Thyroid gland (tissue), 4 donors: ENCODE measurements at regions of chr18 and their contacts with region 1.

Region 1: DNA sequence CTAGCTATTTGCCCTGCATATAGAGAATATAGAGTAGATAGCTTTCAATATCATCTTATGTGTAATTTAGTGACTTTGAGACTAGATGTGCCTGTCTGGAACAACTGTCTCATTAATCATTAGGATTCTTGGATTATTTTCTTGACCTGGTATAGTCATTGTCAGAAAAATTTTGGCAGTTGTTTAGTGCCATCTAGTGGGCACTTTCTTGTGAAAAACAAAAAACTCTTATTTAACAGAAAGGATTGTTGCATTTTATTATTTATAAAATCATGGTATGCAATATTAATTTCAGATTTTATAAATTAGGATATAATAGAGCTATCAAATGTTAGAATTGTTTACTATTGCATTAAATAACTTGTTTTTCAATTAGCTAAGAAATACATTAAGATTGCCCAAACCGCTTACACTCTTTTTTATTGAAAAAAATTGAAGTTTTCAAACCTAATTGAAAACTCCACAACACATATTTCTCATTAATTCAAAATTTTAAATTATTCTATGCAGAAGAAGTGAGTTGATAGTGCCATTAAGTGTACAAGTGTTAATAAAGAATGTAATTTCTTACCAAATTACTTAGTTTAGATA is 80.3 kb downstream of the DYNAP start:
- DNase-seq: no peak
- H3K4me3 ChIP-seq: no peak overlapping the region
- H3K27ac ChIP-seq: no peak overlapping the region
- H3K4me1 ChIP-seq: no peaks in the 10 kb centered on the region
- H3K27me3 ChIP-seq: no peaks in the 10 kb centered on the region
- CTCF ChIP-seq: peak in 4 of 6 experiments; percentile 20 to 59 (median 52)
- POLR2A ChIP-seq: no peak

Region 2: DNA sequence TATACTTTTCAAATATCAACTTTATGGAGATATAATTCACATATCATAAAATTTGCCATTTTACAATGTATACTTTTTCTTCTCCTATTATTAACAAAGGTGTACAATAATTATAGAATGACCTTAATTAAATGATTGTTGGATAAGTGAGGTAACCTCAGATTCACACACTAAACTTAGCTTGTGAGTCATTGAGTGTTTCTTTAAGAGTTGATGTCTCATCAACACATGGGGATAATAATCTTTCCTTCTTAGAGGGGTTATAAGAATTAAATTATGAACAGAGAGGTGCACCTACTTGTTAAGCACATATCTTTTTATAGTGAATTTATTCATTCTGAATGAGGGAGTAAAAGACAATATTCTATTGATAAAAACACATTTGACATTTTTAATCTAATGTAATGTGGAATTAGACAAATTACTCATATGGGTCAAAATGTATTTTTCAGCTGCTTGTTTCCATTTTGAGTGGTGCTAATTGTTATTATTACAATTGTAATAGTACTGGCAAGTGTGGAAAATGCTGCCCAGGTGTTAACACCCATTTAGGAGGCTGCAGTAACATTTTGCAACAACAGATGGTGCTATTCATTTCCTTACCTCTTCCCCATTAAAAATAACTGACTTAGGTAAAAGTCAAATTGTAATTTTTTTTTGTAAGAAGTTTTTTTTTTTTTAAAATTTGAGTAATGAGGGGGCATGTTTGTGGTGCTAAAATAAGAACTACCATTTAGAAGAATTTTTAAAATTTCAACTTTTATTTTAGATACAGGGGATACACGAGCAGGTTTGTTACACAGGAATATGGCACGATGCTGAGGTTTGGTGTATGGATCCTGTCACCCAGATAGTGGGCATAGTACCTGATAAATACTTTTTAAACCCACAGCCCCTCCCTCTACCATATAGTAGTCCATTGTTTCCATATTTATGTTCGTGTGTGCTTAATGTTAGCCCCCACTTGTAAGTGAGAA is 112.5 kb before region 1 on chr18:
- intact Hi-C with region 1: loop called (anchors 5 kb)
- DNase-seq: no peak
- H3K4me3 ChIP-seq: no peak overlapping the region
- H3K27ac ChIP-seq: no peak overlapping the region
- H3K4me1 ChIP-seq: no peaks in the 10 kb centered on the region
- H3K27me3 ChIP-seq: no peaks in the 10 kb centered on the region
- CTCF ChIP-seq: peak in 5 of 6 experiments; percentile 31 to 79 (median 58)
- POLR2A ChIP-seq: no peak

Region 3: GRCh38 chr18:55509631-55510324 is 838.4 kb after region 1 on chr18:
- intact Hi-C with region 1: no loop called
- DNase-seq: peak in 1 of 2 donors; percentile 5
- H3K4me3 ChIP-seq: no peak overlapping the region
- H3K27ac ChIP-seq: peak overlapping the region; percentile 61 to 94 (median 79)
- H3K4me1 ChIP-seq: peaks cover 12 to 24% of the 10 kb centered on the region in 2 donors
- H3K27me3 ChIP-seq: no peaks in the 10 kb centered on the region
- CTCF ChIP-seq: no peak
- POLR2A ChIP-seq: peak in 1 of 2 donors; percentile 11